CD8-positive, alpha-beta T cell (primary cell): ENCODE measurements at regions of chr14 and their contacts with region 1.

Region 1: DNA sequence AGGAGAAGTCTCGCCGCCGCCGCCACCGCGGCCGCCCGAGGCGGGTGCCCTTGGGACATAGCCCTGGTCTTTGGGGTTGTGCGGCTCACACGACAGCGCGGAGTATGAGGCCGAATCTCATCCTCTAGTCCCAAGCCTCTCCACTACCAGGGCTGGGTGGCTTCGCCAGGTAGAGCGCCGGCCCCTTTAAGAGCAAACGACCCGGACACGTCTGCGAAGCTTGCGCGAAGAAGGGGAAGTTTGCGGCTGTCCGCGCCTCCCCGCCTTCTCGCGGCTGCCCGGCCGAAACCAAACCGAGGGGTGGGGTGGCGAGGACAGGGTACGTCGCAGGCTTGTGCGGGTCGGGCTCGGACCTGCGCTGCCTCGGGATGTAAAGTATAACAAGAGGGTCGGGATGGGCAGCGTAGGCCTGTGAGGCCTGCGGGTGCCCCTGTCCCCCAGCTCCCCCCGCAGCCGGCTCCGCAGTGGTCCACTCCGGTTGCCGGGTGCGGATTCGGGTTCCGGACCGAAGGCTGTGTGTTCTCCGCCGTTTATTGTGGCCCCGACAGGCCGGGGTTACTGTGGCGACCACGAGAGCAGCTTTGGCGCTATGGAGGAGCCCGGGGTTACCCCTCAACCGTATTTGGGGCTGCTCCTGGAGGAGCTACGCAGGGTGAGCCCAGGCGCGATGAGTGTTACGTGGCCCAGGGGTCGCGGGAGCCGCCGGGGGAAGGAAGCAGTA is 33.3 kb downstream of the MIA2 start:
- DNase-seq: peak; percentile 58 to 89 (median 72)
- ATAC-seq: peak; percentile 75
- H3K4me3 ChIP-seq: peak overlapping the region; percentile 98
- H3K4me3 Mint-ChIP-seq: peak overlapping the region; percentile 92
- H3K27ac ChIP-seq: peak overlapping the region; percentile 96 to 98
- H3K27ac Mint-ChIP-seq: peak overlapping the region; percentile 98
- H3K4me1 ChIP-seq: peaks cover 35% of the 10 kb centered on the region
- H3K4me1 Mint-ChIP-seq: peaks cover 54% of the 10 kb centered on the region
- H3K27me3 ChIP-seq: no peaks in the 10 kb centered on the region
- H3K27me3 Mint-ChIP-seq: no peaks in the 10 kb centered on the region
- CTCF ChIP-seq: no peak

Region 2: GRCh38 chr14:39102969-39103957 is 163.8 kb before region 1 on chr14 and contains the start of gene SEC23A:
- CTCF ChIA-PET with region 1: no interaction called
- POLR2A ChIA-PET with region 1: interaction called, 6 read pairs
- intact Hi-C with region 1: loop called in 1 of 2 experiments (anchors 2 kb)
- DNase-seq: peak; percentile 57 to 89 (median 82)
- ATAC-seq: peak; percentile 94
- H3K4me3 ChIP-seq: peak within 1 kb of the TSS; percentile 92 to 94
- H3K4me3 Mint-ChIP-seq: peak within 1 kb of the TSS; percentile 95
- H3K27ac ChIP-seq: peak within 1 kb of the TSS; percentile 90 to 93
- H3K27ac Mint-ChIP-seq: peak within 1 kb of the TSS; percentile 98
- H3K4me1 ChIP-seq: peaks cover 23% of the 10 kb centered on the region
- H3K4me1 Mint-ChIP-seq: peaks cover 52% of the 10 kb centered on the region
- H3K27me3 ChIP-seq: no peaks in the 10 kb centered on the region
- H3K27me3 Mint-ChIP-seq: no peaks in the 10 kb centered on the region
- CTCF ChIP-seq: no peak
- total RNA-seq, gene SEC23A: 61.0 to 62.0 TPM

Region 3: GRCh38 chr14:39114073-39114838 is 152.8 kb before region 1 on chr14 and contains the start of gene GEMIN2:
- CTCF ChIA-PET with region 1: no interaction called
- POLR2A ChIA-PET with region 1: interaction called, 4 read pairs
- intact Hi-C with region 1: loop called (anchors 1 to 5 kb)
- DNase-seq: peak; percentile 86 to 97 (median 93)
- ATAC-seq: peak; percentile 98
- H3K4me3 ChIP-seq: peak within 1 kb of the TSS; percentile 73 to 92
- H3K4me3 Mint-ChIP-seq: peak within 1 kb of the TSS; percentile 99
- H3K27ac ChIP-seq: peak within 1 kb of the TSS; percentile 72 to 84
- H3K27ac Mint-ChIP-seq: peak within 1 kb of the TSS; percentile 98
- H3K4me1 ChIP-seq: peaks cover 8% of the 10 kb centered on the region
- H3K4me1 Mint-ChIP-seq: peaks cover 28% of the 10 kb centered on the region
- H3K27me3 ChIP-seq: no peaks in the 10 kb centered on the region
- H3K27me3 Mint-ChIP-seq: no peaks in the 10 kb centered on the region
- CTCF ChIP-seq: no peak
- total RNA-seq, gene GEMIN2: 14.0 to 14.5 TPM

Region 4: GRCh38 chr14:39169541-39169900 is 97.5 kb before region 1 on chr14:
- CTCF ChIA-PET with region 1: no interaction called
- POLR2A ChIA-PET with region 1: interaction called, 24 read pairs
- intact Hi-C with region 1: loop called in 1 of 2 experiments (anchors 1 kb)
- DNase-seq: no peak
- ATAC-seq: no peak
- H3K4me3 ChIP-seq: peak overlapping the region; percentile 78 to 97
- H3K4me3 Mint-ChIP-seq: peak overlapping the region; percentile 87
- H3K27ac ChIP-seq: peak overlapping the region; percentile 84 to 94
- H3K27ac Mint-ChIP-seq: peak overlapping the region; percentile 99
- H3K4me1 ChIP-seq: peaks cover 34% of the 10 kb centered on the region
- H3K4me1 Mint-ChIP-seq: peaks cover 52% of the 10 kb centered on the region
- H3K27me3 ChIP-seq: no peaks in the 10 kb centered on the region
- H3K27me3 Mint-ChIP-seq: no peaks in the 10 kb centered on the region
- CTCF ChIP-seq: no peak

Region 5: DNA sequence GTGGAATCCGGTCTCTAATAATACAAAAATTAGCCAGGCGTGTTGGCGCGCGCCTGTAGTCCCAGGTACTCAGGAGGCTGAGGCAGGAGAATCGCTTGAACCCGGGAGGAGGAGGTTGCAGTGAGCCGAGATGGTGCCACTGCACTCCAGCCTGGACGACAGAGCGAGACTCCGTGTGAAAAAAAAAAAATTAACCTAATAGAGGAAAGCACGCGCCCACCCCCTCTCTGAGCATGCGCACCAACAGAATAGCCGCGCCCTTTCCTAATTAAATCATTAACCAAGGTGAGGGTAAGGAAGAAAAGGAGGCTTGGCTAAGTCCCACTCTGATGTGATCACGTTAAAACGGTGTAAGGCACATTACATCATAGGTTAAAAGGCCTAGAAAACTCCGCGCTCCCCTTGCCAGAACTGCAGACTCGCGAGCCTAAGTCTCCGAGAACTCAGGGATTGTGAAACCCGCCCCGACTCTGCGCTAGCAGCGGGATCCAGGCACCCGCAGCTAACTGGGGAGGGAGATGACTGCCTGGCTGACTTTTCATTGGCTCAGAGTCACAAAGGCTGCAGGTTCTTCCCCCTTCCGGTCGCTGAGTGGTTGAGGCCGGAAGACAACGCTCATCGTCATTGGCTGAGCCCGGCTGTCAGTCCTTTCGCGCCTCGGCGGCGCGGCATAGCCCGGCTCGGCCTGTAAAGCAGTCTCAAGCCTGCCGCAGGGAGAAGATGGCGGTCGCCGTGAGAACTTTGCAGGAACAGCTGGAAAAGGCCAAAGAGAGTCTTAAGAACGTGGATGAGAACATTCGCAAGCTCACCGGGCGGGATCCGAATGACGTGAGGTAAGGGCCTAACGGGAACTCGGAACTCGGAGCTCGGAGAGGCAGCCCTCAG is 92.2 kb before region 1 on chr14 and contains the start of gene PNN:
- CTCF ChIA-PET with region 1: no interaction called
- POLR2A ChIA-PET with region 1: interaction called, 24 read pairs
- intact Hi-C with region 1: loop called (anchors 1 to 2 kb)
- DNase-seq: peak; percentile 91 to 99 (median 96)
- ATAC-seq: peak; percentile 83
- H3K4me3 ChIP-seq: peak within 1 kb of the TSS; percentile 87 to 98
- H3K4me3 Mint-ChIP-seq: peak within 1 kb of the TSS; percentile 100
- H3K27ac ChIP-seq: peak within 1 kb of the TSS; percentile 92 to 94
- H3K27ac Mint-ChIP-seq: peak within 1 kb of the TSS; percentile 100
- H3K4me1 ChIP-seq: peaks cover 23% of the 10 kb centered on the region
- H3K4me1 Mint-ChIP-seq: peaks cover 48% of the 10 kb centered on the region
- H3K27me3 ChIP-seq: no peaks in the 10 kb centered on the region
- H3K27me3 Mint-ChIP-seq: no peaks in the 10 kb centered on the region
- CTCF ChIP-seq: no peak
- total RNA-seq, gene PNN: 102 to 109 TPM

Region 6: GRCh38 chr14:39232554-39233415 is 34.2 kb before region 1 on chr14:
- CTCF ChIA-PET with region 1: interaction called, 5 read pairs
- POLR2A ChIA-PET with region 1: interaction called, 6 read pairs
- intact Hi-C with region 1: loop called (anchors 1 to 5 kb)
- DNase-seq: peak in 2 of 9 experiments; percentile 34 to 61
- ATAC-seq: no peak
- H3K4me3 ChIP-seq: no peak overlapping the region
- H3K4me3 Mint-ChIP-seq: no peak overlapping the region
- H3K27ac ChIP-seq: peak overlapping the region in 1 of 2 experiments; percentile 60
- H3K27ac Mint-ChIP-seq: peak overlapping the region; percentile 35
- H3K4me1 ChIP-seq: peaks cover 21% of the 10 kb centered on the region
- H3K4me1 Mint-ChIP-seq: peaks cover 39% of the 10 kb centered on the region
- H3K27me3 ChIP-seq: no peaks in the 10 kb centered on the region
- H3K27me3 Mint-ChIP-seq: no peaks in the 10 kb centered on the region
- CTCF ChIP-seq: no peak

Region 7: DNA sequence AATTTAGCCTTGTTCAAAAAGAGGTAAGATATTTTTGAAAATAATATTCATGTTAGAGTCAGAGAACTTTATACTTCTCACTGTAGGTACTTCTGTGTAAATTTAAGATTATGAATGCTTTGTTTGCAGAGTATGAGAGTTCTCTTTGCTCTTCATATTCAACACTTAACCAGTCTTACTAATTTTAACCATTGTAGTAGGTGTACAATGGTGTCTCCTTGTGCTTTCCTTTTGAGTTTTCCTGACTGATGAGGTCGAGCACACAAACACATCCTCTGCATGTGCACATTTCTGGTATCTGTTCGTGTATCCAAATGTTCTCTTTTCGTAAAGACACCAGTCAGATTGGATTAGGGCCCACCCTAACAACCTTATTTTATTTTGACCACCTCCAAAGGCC is 12.5 kb after region 1 on chr14:
- CTCF ChIA-PET with region 1: no interaction called
- POLR2A ChIA-PET with region 1: interaction called, 6 read pairs
- intact Hi-C with region 1: loop called in 1 of 2 experiments (anchors 2 kb)
- DNase-seq: no peak
- ATAC-seq: no peak
- H3K4me3 ChIP-seq: no peak overlapping the region
- H3K4me3 Mint-ChIP-seq: no peak overlapping the region
- H3K27ac ChIP-seq: no peak overlapping the region
- H3K27ac Mint-ChIP-seq: no peak overlapping the region
- H3K4me1 ChIP-seq: no peaks in the 10 kb centered on the region
- H3K4me1 Mint-ChIP-seq: peaks cover 44% of the 10 kb centered on the region
- H3K27me3 ChIP-seq: no peaks in the 10 kb centered on the region
- H3K27me3 Mint-ChIP-seq: no peaks in the 10 kb centered on the region
- CTCF ChIP-seq: no peak